Naive thymus-derived CD4-positive, alpha-beta T cell (primary cell): ENCODE measurements at regions of chr4 and their contacts with region 1.

Region 1: GRCh38 chr4:123396307-123397143 is at the start of gene SPRY1:
- DNase-seq: peak; percentile 22 to 81 (median 72)
- ATAC-seq: peak; percentile 72
- H3K4me3 ChIP-seq: peak within 1 kb of the TSS; percentile 69
- H3K4me3 Mint-ChIP-seq: peak within 1 kb of the TSS; percentile 81 to 92 (median 88)
- H3K27ac ChIP-seq: peak within 1 kb of the TSS; percentile 52
- H3K27ac Mint-ChIP-seq: peak within 1 kb of the TSS; percentile 13 to 91 (median 70)
- H3K4me1 ChIP-seq: peaks cover 0 to 17% of the 10 kb centered on the region in 2 donors
- H3K4me1 Mint-ChIP-seq: peaks cover 14 to 33% (median 19%) of the 10 kb centered on the region in 7 donors
- H3K27me3 ChIP-seq: no peaks in the 10 kb centered on the region
- H3K27me3 Mint-ChIP-seq: peaks cover 11 to 33% (median 17%) of the 10 kb centered on the region in 5 donors
- total RNA-seq, gene SPRY1: 2.5 to 20.5 (median 6.2) TPM

Region 2: GRCh38 chr4:122151982-122152710 is 1244.4 kb before region 1 on chr4 and contains the start of gene BLTP1:
- CTCF ChIA-PET with region 1: no interaction called
- POLR2A ChIA-PET with region 1: no interaction called
- intact Hi-C with region 1: loop called in 1 of 2 experiments (anchors 5 kb)
- DNase-seq: peak; percentile 81 to 92 (median 87)
- ATAC-seq: peak; percentile 95
- H3K4me3 ChIP-seq: peak within 1 kb of the TSS; percentile 96
- H3K4me3 Mint-ChIP-seq: peak within 1 kb of the TSS; percentile 79 to 98 (median 98)
- H3K27ac ChIP-seq: peak within 1 kb of the TSS; percentile 85
- H3K27ac Mint-ChIP-seq: peak within 1 kb of the TSS; percentile 90 to 100 (median 97)
- H3K4me1 ChIP-seq: peaks cover 22 to 28% of the 10 kb centered on the region in 2 donors
- H3K4me1 Mint-ChIP-seq: peaks cover 41 to 84% (median 72%) of the 10 kb centered on the region in 7 donors
- H3K27me3 ChIP-seq: no peaks in the 10 kb centered on the region
- H3K27me3 Mint-ChIP-seq: no peaks in the 10 kb centered on the region
- total RNA-seq, gene BLTP1: 45.9 to 86.6 (median 72.8) TPM

Region 3: GRCh38 chr4:122922877-122923511 is 473.5 kb before region 1 on chr4:
- CTCF ChIA-PET with region 1: no interaction called
- POLR2A ChIA-PET with region 1: no interaction called
- intact Hi-C with region 1: loop called (anchors 2 kb)
- DNase-seq: peak; percentile 60 to 87 (median 82)
- ATAC-seq: peak; percentile 98
- H3K4me3 ChIP-seq: peak overlapping the region; percentile 97
- H3K4me3 Mint-ChIP-seq: peak overlapping the region in 6 of 10 donors; percentile 98 to 100 (median 98)
- H3K27ac ChIP-seq: peak overlapping the region; percentile 68
- H3K27ac Mint-ChIP-seq: peak overlapping the region in 8 of 9 donors; percentile 92 to 98 (median 96)
- H3K4me1 ChIP-seq: peaks cover 11 to 12% of the 10 kb centered on the region in 2 donors
- H3K4me1 Mint-ChIP-seq: peaks cover 0 to 33% (median 7%) of the 10 kb centered on the region in 7 donors
- H3K27me3 ChIP-seq: no peaks in the 10 kb centered on the region
- H3K27me3 Mint-ChIP-seq: no peaks in the 10 kb centered on the region

Region 4: DNA sequence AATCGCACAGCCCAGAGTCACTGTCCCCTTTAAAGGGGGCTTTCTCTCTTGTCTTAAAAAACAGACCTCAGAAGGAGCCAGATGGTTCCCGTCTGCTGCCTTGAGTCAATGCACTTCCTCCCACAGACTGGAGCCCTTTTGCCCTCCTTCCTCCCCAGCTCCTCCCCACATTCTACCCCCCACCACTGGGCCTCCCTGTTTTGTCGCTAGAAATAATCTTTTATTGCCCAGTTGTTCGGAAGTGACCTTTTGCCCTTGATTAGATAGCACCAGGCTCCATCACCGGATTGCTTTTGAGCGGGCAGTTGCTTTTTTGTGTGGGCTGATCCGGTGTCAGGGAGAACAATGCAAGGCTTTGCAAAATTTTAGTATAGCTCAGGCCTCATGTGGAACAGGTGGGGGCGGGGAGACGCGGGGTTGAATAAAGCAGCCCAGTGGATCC is 47.8 kb after region 1 on chr4:
- CTCF ChIA-PET with region 1: no interaction called
- POLR2A ChIA-PET with region 1: no interaction called
- intact Hi-C with region 1: loop called (anchors 1 to 10 kb)
- DNase-seq: peak in 6 of 9 donors; percentile 1 to 48 (median 10)
- ATAC-seq: peak; percentile 81
- H3K4me3 ChIP-seq: peak overlapping the region; percentile 13
- H3K4me3 Mint-ChIP-seq: peak overlapping the region; percentile 41 to 82 (median 62)
- H3K27ac ChIP-seq: no peak overlapping the region
- H3K27ac Mint-ChIP-seq: peak overlapping the region in 6 of 9 donors; percentile 4 to 82 (median 41)
- H3K4me1 ChIP-seq: peaks cover 0 to 6% of the 10 kb centered on the region in 2 donors
- H3K4me1 Mint-ChIP-seq: peaks cover 7 to 28% (median 17%) of the 10 kb centered on the region in 7 donors
- H3K27me3 ChIP-seq: no peaks in the 10 kb centered on the region
- H3K27me3 Mint-ChIP-seq: peaks cover 0 to 2% (median 0%) of the 10 kb centered on the region in 5 donors

Region 5: DNA sequence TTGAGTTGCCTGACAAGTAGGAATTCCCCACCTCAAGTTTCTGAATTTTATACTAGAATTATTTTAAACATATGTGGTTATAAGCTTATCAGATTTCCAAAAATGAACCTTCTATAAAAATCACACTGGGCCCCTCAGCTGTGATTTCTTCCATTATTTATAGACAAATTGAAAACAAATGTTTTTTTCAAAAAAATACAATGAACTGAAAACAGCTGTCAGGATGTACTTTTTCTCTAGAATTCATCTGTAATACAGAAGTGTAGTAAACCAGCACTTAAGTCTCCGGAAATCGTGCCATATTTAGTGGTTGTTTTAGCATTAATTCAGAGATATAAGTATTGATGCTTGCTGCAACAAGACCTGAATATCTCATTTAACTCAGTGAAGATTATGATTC is 74.1 kb after region 1 on chr4:
- CTCF ChIA-PET with region 1: no interaction called
- POLR2A ChIA-PET with region 1: no interaction called
- intact Hi-C with region 1: no loop called
- DNase-seq: no peak
- ATAC-seq: no peak
- H3K4me3 ChIP-seq: no peak overlapping the region
- H3K4me3 Mint-ChIP-seq: no peak overlapping the region
- H3K27ac ChIP-seq: no peak overlapping the region
- H3K27ac Mint-ChIP-seq: no peak overlapping the region
- H3K4me1 ChIP-seq: no peaks in the 10 kb centered on the region
- H3K4me1 Mint-ChIP-seq: peaks cover 0 to 13% (median 0%) of the 10 kb centered on the region in 7 donors
- H3K27me3 ChIP-seq: peaks cover 0 to 3% of the 10 kb centered on the region in 2 donors
- H3K27me3 Mint-ChIP-seq: peaks cover 0 to 3% (median 0%) of the 10 kb centered on the region in 5 donors

Region 6: DNA sequence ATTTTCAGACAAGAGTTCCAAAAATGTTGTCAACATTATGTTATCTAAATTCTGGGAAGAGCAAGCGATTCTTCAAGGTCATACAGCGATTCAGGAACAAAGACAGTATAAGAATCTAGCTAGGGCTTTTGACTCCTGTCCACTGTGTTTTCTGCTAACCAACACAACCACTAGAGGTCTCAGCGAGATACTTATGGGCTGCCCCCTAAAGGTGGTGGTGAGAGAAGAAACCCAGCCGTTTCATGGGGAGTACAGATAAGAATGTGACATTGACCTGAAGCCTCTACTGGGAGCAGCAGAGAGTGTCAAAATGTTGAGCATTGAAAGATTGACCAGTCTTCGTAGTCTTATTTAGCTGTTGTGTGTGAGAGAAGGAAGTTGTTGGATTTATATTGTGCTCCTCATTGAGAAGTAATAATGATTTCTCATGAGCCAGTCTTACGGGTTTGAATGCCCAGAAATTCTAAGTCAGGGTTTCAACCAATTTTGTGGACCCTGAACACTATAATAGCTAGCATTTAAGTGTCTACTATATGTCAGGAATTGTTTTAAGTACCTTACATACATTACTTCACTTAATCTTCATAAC is 168.3 kb after region 1 on chr4:
- CTCF ChIA-PET with region 1: no interaction called
- POLR2A ChIA-PET with region 1: no interaction called
- intact Hi-C with region 1: loop called (anchors 1 to 2 kb)
- DNase-seq: peak in 8 of 9 donors; percentile 1 to 55 (median 26)
- ATAC-seq: peak; percentile 98
- H3K4me3 ChIP-seq: no peak overlapping the region
- H3K4me3 Mint-ChIP-seq: no peak overlapping the region
- H3K27ac ChIP-seq: no peak overlapping the region
- H3K27ac Mint-ChIP-seq: no peak overlapping the region
- H3K4me1 ChIP-seq: no peaks in the 10 kb centered on the region
- H3K4me1 Mint-ChIP-seq: peaks cover 0 to 6% (median 0%) of the 10 kb centered on the region in 7 donors
- H3K27me3 ChIP-seq: no peaks in the 10 kb centered on the region
- H3K27me3 Mint-ChIP-seq: peaks cover 8 to 25% (median 16%) of the 10 kb centered on the region in 5 donors

Region 7: DNA sequence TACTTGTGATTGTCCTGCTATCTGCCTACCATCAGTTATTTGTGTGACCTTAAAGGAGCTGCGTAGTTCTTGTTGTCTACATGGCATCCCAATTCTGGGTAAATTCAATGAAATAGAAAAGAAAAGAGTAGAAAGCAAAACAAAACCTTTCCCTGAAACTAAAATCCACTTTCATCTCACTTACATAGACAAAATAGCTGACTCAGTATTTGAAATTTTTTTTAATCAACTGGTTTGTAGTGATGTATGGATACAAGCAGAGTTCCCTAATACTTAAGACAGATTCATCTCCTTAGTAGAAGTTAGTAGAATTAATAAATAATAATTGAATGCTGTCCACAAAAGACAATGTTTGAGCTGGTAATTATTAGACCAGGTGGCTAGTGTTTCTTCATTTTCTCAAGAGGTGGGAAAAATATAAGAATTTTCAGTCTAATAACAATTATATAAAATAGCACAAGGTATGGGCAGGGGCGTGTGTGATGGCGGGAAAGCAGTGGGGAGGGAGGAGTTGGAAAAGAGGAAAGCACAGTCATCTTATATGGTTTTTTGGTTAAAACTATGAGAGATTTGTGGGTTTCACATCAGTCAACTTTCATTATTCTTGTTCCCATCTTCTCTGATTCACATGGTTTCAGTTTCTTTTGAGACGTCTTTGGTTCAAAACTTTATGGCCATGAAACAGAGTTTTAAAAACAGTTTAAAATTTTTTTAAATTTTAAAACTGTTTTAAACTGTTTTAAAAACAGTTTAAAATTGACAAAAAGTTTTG is 275.3 kb after region 1 on chr4:
- CTCF ChIA-PET with region 1: no interaction called
- POLR2A ChIA-PET with region 1: interaction called, 3 read pairs
- intact Hi-C with region 1: loop called in 1 of 2 experiments (anchors 1 kb)
- DNase-seq: peak in 1 of 9 donors; percentile 35
- ATAC-seq: no peak
- H3K4me3 ChIP-seq: no peak overlapping the region
- H3K4me3 Mint-ChIP-seq: peak overlapping the region in 2 of 10 donors; percentile 43 to 55
- H3K27ac ChIP-seq: no peak overlapping the region
- H3K27ac Mint-ChIP-seq: peak overlapping the region in 1 of 9 donors; percentile 64
- H3K4me1 ChIP-seq: no peaks in the 10 kb centered on the region
- H3K4me1 Mint-ChIP-seq: peaks cover 0 to 26% (median 6%) of the 10 kb centered on the region in 7 donors
- H3K27me3 ChIP-seq: no peaks in the 10 kb centered on the region
- H3K27me3 Mint-ChIP-seq: peaks cover 0 to 65% (median 10%) of the 10 kb centered on the region in 5 donors